ENCODE measurements at regions of chr1 and their contacts with region 1.

Region 1: GRCh38 chr1:171313835-171314320 is at the start of gene FMO4:
- DNase-seq: peak; percentile 75
- H3K4me3 ChIP-seq: peak within 1 kb of the TSS in 6 of 8 donors; percentile 11 to 57 (median 16)
- H3K27ac ChIP-seq: peak within 1 kb of the TSS in 7 of 8 donors; percentile 33 to 73 (median 68)
- H3K4me1 ChIP-seq: peaks cover 0 to 24% (median 12%) of the 10 kb centered on the region in 6 donors
- H3K27me3 ChIP-seq: no peaks in the 10 kb centered on the region
- CTCF ChIP-seq: peak; percentile 83 to 95 (median 91)
- POLR2A ChIP-seq: peak in 1 of 3 donors; percentile 15
- total RNA-seq, gene FMO4: 2.0 to 10.8 (median 4.6) TPM

Region 2: GRCh38 chr1:171245458-171246064 is 68.3 kb before region 1 on chr1:
- intact Hi-C with region 1: loop called (anchors 10 kb)
- DNase-seq: no peak
- H3K4me3 ChIP-seq: no peak overlapping the region
- H3K27ac ChIP-seq: no peak overlapping the region
- H3K4me1 ChIP-seq: no peaks in the 10 kb centered on the region
- H3K27me3 ChIP-seq: peaks cover 0 to 12% (median 3%) of the 10 kb centered on the region in 7 donors
- CTCF ChIP-seq: peak in 10 of 11 experiments; percentile 17 to 67 (median 54)
- POLR2A ChIP-seq: no peak